ENCODE measurements at regions of chr3 and their contacts with region 1.

Region 1: GRCh38 chr3:15805756-15806266 is 8.0 kb upstream of the ANKRD28 start:
- DNase-seq: peak; percentile 43
- CTCF ChIP-seq: no peak

Region 2: GRCh38 chr3:15629860-15630597 is 175.8 kb before region 1 on chr3:
- in situ Hi-C with region 1: loop called (anchors 10 kb)
- DNase-seq: peak; percentile 79
- CTCF ChIP-seq: peak; percentile 75